Natural killer cell (primary cell): ENCODE measurements at regions of chr4 and their contacts with region 1.

Region 1: GRCh38 chr4:143358923-143359643 is 22.4 kb downstream of the GAB1 start:
- DNase-seq: peak; percentile 33 to 48
- ATAC-seq: peak; percentile 86 to 91 (median 90)
- H3K4me3 ChIP-seq: no peak overlapping the region
- H3K4me3 Mint-ChIP-seq: peak overlapping the region; percentile 84
- H3K27ac ChIP-seq: peak overlapping the region; percentile 75
- H3K27ac Mint-ChIP-seq: peak overlapping the region; percentile 84 to 91
- H3K4me1 ChIP-seq: peaks cover 43% of the 10 kb centered on the region
- H3K4me1 Mint-ChIP-seq: peaks cover 43 to 52% of the 10 kb centered on the region in 2 donors
- H3K27me3 ChIP-seq: no peaks in the 10 kb centered on the region
- H3K27me3 Mint-ChIP-seq: no peaks in the 10 kb centered on the region
- CTCF ChIP-seq: no peak

Region 2: GRCh38 chr4:143337600-143338287 is 21.3 kb before region 1 on chr4:
- intact Hi-C with region 1: loop called (anchors 2 kb)
- DNase-seq: no peak
- ATAC-seq: no peak
- H3K4me3 ChIP-seq: peak overlapping the region; percentile 54
- H3K4me3 Mint-ChIP-seq: peak overlapping the region; percentile 98
- H3K27ac ChIP-seq: peak overlapping the region; percentile 37
- H3K27ac Mint-ChIP-seq: peak overlapping the region; percentile 68 to 73
- H3K4me1 ChIP-seq: peaks cover 15% of the 10 kb centered on the region
- H3K4me1 Mint-ChIP-seq: peaks cover 11 to 22% of the 10 kb centered on the region in 2 donors
- H3K27me3 ChIP-seq: no peaks in the 10 kb centered on the region
- H3K27me3 Mint-ChIP-seq: peaks cover 5 to 7% of the 10 kb centered on the region in 2 donors
- CTCF ChIP-seq: no peak

Region 3: GRCh38 chr4:143406523-143406922 is 47.4 kb after region 1 on chr4:
- intact Hi-C with region 1: loop called (anchors 10 kb)
- DNase-seq: no peak
- ATAC-seq: no peak
- H3K4me3 ChIP-seq: no peak overlapping the region
- H3K4me3 Mint-ChIP-seq: no peak overlapping the region
- H3K27ac ChIP-seq: no peak overlapping the region
- H3K27ac Mint-ChIP-seq: peak overlapping the region in 1 of 2 donors; percentile 46
- H3K4me1 ChIP-seq: peaks cover 8% of the 10 kb centered on the region
- H3K4me1 Mint-ChIP-seq: peaks cover 24 to 46% of the 10 kb centered on the region in 2 donors
- H3K27me3 ChIP-seq: no peaks in the 10 kb centered on the region
- H3K27me3 Mint-ChIP-seq: no peaks in the 10 kb centered on the region
- CTCF ChIP-seq: no peak

Region 4: DNA sequence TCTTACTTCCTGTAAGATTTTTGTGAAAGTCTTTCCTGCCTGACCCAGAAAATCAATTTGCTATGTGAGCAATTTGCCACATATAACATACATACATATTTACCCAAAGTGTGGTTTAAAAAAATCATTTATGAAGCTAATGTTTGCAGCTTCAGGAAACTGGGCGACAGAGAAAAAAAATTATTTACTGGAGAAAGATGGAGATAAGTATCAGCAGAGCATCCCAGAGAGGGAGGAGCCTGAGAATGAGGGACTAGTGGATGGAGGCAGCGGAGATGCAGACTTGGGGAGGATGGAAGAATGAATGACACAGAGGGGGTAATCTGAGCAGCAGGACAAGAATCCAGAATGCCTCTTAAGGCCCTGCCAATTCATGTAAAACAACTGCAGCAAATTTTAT is 782.4 kb after region 1 on chr4:
- intact Hi-C with region 1: no loop called
- DNase-seq: no peak
- ATAC-seq: no peak
- H3K4me3 ChIP-seq: no peak overlapping the region
- H3K4me3 Mint-ChIP-seq: no peak overlapping the region
- H3K27ac ChIP-seq: no peak overlapping the region
- H3K27ac Mint-ChIP-seq: no peak overlapping the region
- H3K4me1 ChIP-seq: no peaks in the 10 kb centered on the region
- H3K4me1 Mint-ChIP-seq: no peaks in the 10 kb centered on the region
- H3K27me3 ChIP-seq: no peaks in the 10 kb centered on the region
- H3K27me3 Mint-ChIP-seq: peaks cover 5 to 6% of the 10 kb centered on the region in 2 donors
- CTCF ChIP-seq: no peak